HepG2 (cell line): ENCODE measurements at regions of chr2 and their contacts with region 1.

Region 1: GRCh38 chr2:11357428-11357972 is 13.1 kb upstream of the ROCK2 start:
- DNase-seq: peak; percentile 100
- ATAC-seq: peak; percentile 87
- H3K4me3 ChIP-seq: peak overlapping the region in 1 of 3 experiments; percentile 50; a peak in 2 of 6 replicates
- H3K27ac ChIP-seq: peak overlapping the region; percentile 93
- H3K4me1 ChIP-seq: peaks cover 95% of the 10 kb centered on the region
- H3K27me3 ChIP-seq: no peaks in the 10 kb centered on the region
- CTCF ChIP-seq: peak; percentile 15; the same call in 1 of the 2 replicates
- EP300 ChIP-seq: peak; percentile 100
- POLR2A ChIP-seq: peak; percentile 79 to 83
- RAD21 ChIP-seq: peak; percentile 91

Region 2: DNA sequence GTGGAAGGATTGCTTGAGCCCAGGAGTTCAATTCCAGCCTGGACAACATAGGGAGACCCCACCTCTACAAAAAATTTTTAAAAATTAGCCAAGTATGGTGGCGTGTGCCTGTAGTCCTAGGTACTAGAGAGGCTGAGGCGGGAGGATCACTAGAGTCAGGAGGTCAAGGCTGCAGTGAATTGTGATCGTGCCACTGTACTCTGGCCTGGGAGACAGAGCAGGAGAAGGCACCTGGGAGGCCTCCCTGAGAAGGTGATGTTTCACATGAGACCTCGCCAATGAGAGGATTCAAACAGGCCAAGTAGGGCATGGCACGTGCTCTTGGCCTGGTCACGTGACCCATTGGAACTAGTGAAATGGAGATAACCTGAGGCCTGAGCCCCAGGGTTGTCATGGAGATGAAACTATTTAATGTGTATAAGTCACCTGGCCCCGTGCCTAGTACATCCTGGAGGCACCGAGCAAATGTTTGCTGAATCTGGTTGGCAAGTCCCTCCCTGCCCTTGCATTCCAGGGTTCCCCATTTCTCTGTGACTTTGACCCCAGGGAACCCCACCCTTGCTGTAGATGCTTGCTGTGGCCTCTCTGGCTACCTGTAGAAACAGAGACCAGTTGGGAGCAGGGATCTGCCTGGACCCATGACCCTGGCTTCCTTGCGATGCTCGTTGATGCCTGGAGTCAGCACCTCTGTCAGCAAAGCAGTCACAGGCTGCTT is 13.0 kb after region 1 on chr2:
- CTCF ChIA-PET with region 1: no interaction called
- POLR2A ChIA-PET with region 1: interaction called, 174 read pairs
- in situ Hi-C with region 1: no loop called
- intact Hi-C with region 1: loop called (anchors 1 kb)
- DNase-seq: peak; percentile 99
- ATAC-seq: peak; percentile 75
- H3K4me3 ChIP-seq: peak overlapping the region in 1 of 3 experiments; percentile 8; a peak in 1 of 6 replicates
- H3K27ac ChIP-seq: peak overlapping the region; percentile 58
- H3K4me1 ChIP-seq: peaks cover 100% of the 10 kb centered on the region
- H3K27me3 ChIP-seq: no peaks in the 10 kb centered on the region
- CTCF ChIP-seq: no peak
- EP300 ChIP-seq: peak; percentile 83; a peak in 3 of 4 replicates
- POLR2A ChIP-seq: no peak; a peak in 1 of 4 replicates
- RAD21 ChIP-seq: peak; percentile 41

Region 3: GRCh38 chr2:11377928-11378545 is 20.5 kb after region 1 on chr2:
- CTCF ChIA-PET with region 1: no interaction called
- POLR2A ChIA-PET with region 1: interaction called, 174 read pairs
- in situ Hi-C with region 1: no loop called
- intact Hi-C with region 1: no loop called
- DNase-seq: no peak
- ATAC-seq: no peak
- H3K4me3 ChIP-seq: no peak overlapping the region
- H3K27ac ChIP-seq: no peak overlapping the region
- H3K4me1 ChIP-seq: peaks cover 90% of the 10 kb centered on the region
- H3K27me3 ChIP-seq: no peaks in the 10 kb centered on the region
- CTCF ChIP-seq: no peak
- EP300 ChIP-seq: no peak
- POLR2A ChIP-seq: no peak
- RAD21 ChIP-seq: no peak

Region 4: GRCh38 chr2:11389551-11390528 is 32.3 kb after region 1 on chr2:
- CTCF ChIA-PET with region 1: no interaction called
- POLR2A ChIA-PET with region 1: interaction called, 36 read pairs
- in situ Hi-C with region 1: no loop called
- intact Hi-C with region 1: no loop called
- DNase-seq: peak; percentile 93
- ATAC-seq: peak; percentile 65
- H3K4me3 ChIP-seq: peak overlapping the region in 2 of 3 experiments; percentile 33 to 61; a peak in 3 of 6 replicates
- H3K27ac ChIP-seq: no peak overlapping the region
- H3K4me1 ChIP-seq: peaks cover 79% of the 10 kb centered on the region
- H3K27me3 ChIP-seq: no peaks in the 10 kb centered on the region
- CTCF ChIP-seq: no peak
- EP300 ChIP-seq: peak in 1 of 2 experiments; percentile 49; a peak in 1 of 4 replicates
- POLR2A ChIP-seq: no peak
- RAD21 ChIP-seq: no peak

Region 5: DNA sequence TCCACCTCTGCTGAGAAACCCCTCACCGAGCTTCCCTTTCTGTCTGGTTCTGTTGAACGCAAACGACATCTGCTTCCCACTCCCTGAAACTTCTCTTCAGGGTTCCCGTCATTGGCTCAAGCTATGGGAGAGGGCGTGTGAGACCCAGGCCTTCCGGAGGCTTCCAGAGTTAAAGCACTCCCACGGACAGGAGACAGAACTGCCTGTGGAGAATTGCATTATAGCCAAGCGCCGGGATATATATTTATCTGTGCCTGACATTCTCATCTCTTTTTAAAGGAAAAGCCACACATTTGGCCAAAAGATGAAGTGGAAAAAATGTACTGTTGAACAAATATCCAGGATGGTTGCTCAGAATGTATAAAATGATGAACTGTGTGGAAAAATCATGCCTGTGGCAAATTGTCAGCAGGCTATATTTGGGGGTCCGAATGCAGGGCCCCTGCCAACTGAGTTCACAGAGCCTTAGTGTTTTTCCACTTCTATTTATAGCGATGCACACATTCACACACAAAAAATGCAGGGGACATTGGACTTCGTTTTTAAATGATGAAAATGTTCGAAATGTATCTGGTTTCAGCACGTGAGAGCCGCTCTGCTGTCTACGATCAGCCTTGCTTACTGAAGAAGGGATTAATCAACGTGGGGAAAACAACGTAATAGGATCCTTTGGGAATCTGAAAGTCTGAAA is 48.9 kb after region 1 on chr2:
- CTCF ChIA-PET with region 1: no interaction called
- POLR2A ChIA-PET with region 1: interaction called, 25 read pairs
- in situ Hi-C with region 1: no loop called
- intact Hi-C with region 1: no loop called
- DNase-seq: no peak
- ATAC-seq: no peak
- H3K4me3 ChIP-seq: no peak overlapping the region
- H3K27ac ChIP-seq: no peak overlapping the region
- H3K4me1 ChIP-seq: peaks cover 58% of the 10 kb centered on the region
- H3K27me3 ChIP-seq: no peaks in the 10 kb centered on the region
- CTCF ChIP-seq: no peak
- EP300 ChIP-seq: no peak
- POLR2A ChIP-seq: no peak
- RAD21 ChIP-seq: no peak

Region 6: DNA sequence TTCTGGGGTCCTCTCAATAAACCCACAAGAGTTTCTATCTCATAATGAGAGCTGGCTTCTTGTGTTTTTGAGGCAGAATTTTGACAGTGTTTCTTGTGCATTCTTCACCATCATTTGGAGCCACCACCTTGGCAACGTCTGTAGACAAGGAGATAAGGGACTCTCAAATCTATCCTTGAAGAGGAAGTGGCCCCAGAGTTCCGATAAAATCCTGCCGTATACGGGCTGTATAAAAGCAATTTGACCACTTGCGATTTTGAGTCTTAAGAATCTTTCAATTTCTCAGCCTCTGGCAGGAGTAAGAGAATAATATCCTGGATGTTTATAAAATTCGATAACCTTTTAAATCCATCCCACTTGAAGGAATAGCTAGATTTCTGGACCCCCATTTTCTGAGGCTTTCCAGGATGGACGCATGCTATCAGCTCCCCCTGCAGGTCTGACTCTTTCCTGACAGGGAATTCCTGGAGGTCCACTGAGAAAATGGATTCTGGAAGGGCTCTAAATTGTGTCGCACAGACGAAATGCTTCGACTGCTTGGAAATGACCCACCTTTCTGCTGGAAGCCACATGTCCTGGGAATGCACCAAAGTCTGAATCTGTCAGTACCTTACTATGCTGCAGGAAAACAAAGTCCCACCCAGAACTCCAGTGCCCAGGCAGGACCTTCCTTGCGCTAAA is 54.4 kb after region 1 on chr2:
- CTCF ChIA-PET with region 1: no interaction called
- POLR2A ChIA-PET with region 1: interaction called, 13 read pairs
- in situ Hi-C with region 1: no loop called
- intact Hi-C with region 1: no loop called
- DNase-seq: peak; percentile 65
- ATAC-seq: peak; percentile 78
- H3K4me3 ChIP-seq: no peak overlapping the region; a peak in 1 of 6 replicates
- H3K27ac ChIP-seq: no peak overlapping the region
- H3K4me1 ChIP-seq: peaks cover 33% of the 10 kb centered on the region
- H3K27me3 ChIP-seq: no peaks in the 10 kb centered on the region
- CTCF ChIP-seq: peak; percentile 92
- EP300 ChIP-seq: no peak
- POLR2A ChIP-seq: no peak
- RAD21 ChIP-seq: peak; percentile 93